T-cell (primary cell): ENCODE measurements at regions of chr2 and their contacts with region 1.

Region 1: GRCh38 chr2:96336104-96336775 is 674 bp downstream of the NCAPH start:
- DNase-seq: no peak
- ATAC-seq: no peak
- H3K4me3 ChIP-seq: peak overlapping the region in 1 of 2 donors; percentile 81
- H3K4me3 Mint-ChIP-seq: peak overlapping the region; percentile 73 to 82 (median 82)
- H3K27ac ChIP-seq: no peak overlapping the region
- H3K27ac Mint-ChIP-seq: peak overlapping the region; percentile 44 to 62
- H3K4me1 ChIP-seq: peaks cover 2 to 24% of the 10 kb centered on the region in 2 experiments
- H3K4me1 Mint-ChIP-seq: peaks cover 27 to 43% (median 29%) of the 10 kb centered on the region in 3 donors
- H3K27me3 ChIP-seq: no peaks in the 10 kb centered on the region
- H3K27me3 Mint-ChIP-seq: no peaks in the 10 kb centered on the region

Region 2: DNA sequence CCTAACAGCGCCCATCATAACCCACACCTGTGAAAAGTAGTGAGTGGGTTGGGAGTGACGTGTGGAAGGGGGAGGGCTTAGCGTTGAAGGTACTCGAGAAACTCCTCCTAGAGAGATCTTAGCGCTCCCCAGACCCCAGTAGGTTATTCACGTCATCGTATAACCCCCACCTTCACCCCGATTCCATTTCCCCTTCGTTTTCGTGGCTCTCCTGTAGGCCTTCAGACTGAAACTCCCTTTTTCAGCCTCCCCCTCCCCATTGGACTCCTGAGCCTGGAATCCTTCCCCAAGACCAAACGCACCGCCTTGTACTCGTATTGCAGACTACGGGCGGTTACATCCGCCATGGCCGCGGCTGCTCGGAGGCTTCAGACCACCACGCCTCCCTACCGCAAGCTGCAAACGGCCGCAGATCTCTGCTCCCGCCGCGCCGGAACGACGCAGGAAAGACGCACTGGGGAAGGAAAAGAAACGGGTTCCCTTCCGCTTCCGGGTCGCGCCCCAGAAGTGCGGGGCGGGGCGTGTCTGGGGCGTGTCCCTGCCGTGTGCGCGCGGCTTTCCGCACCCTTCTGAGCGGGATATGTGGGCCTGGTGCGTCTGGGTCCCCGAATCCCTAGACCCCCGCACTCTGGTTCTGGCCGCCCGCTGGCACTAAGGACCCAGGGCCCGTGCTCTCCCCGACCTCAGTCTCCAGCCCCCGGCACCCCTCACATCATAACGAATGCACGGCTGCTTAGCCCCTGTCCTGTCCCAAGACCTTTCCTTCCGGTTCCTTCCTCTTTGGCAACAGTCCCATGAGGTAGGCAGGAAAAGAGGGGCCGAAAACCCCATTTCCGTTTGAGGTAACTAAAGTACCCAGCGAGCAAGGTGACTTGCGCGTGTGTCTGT is 30.9 kb before region 1 on chr2 and contains the start of gene SNRNP200:
- CTCF ChIA-PET with region 1: interaction called in 1 of 2 experiments, 6 read pairs
- POLR2A ChIA-PET with region 1: interaction called in 1 of 2 experiments, 11 read pairs
- DNase-seq: peak; percentile 83 to 96 (median 89)
- ATAC-seq: peak; percentile 89 to 96 (median 96)
- H3K4me3 ChIP-seq: peak within 1 kb of the TSS; percentile 93 to 99
- H3K4me3 Mint-ChIP-seq: peak within 1 kb of the TSS; percentile 97 to 99 (median 98)
- H3K27ac ChIP-seq: peak within 1 kb of the TSS; percentile 96
- H3K27ac Mint-ChIP-seq: peak within 1 kb of the TSS; percentile 98
- H3K4me1 ChIP-seq: peaks cover 11 to 38% of the 10 kb centered on the region in 2 experiments
- H3K4me1 Mint-ChIP-seq: peaks cover 58 to 63% (median 62%) of the 10 kb centered on the region in 3 donors
- H3K27me3 ChIP-seq: no peaks in the 10 kb centered on the region
- H3K27me3 Mint-ChIP-seq: no peaks in the 10 kb centered on the region
- total RNA-seq, gene SNRNP200: 200 to 254 (median 203) TPM

Region 3: GRCh38 chr2:96407041-96407918 is 71.0 kb after region 1 on chr2:
- CTCF ChIA-PET with region 1: no interaction called
- POLR2A ChIA-PET with region 1: no interaction called
- DNase-seq: peak; percentile 66 to 95 (median 87)
- ATAC-seq: peak; percentile 94 to 98 (median 96)
- H3K4me3 ChIP-seq: peak overlapping the region in 1 of 2 donors; percentile 26
- H3K4me3 Mint-ChIP-seq: peak overlapping the region; percentile 71 to 78 (median 73)
- H3K27ac ChIP-seq: peak overlapping the region; percentile 67
- H3K27ac Mint-ChIP-seq: peak overlapping the region; percentile 99
- H3K4me1 ChIP-seq: peaks cover 11 to 36% of the 10 kb centered on the region in 2 experiments
- H3K4me1 Mint-ChIP-seq: peaks cover 35 to 44% (median 42%) of the 10 kb centered on the region in 3 donors
- H3K27me3 ChIP-seq: no peaks in the 10 kb centered on the region
- H3K27me3 Mint-ChIP-seq: no peaks in the 10 kb centered on the region